ENCODE measurements at regions of chr2 and their contacts with region 1.

Region 1: GRCh38 chr2:74587664-74588277 is 33.3 kb downstream of the DOK1 start:
- DNase-seq: peak; percentile 57
- H3K4me3 ChIP-seq: no peak overlapping the region
- H3K27ac ChIP-seq: no peak overlapping the region
- H3K4me1 ChIP-seq: peaks cover 14% of the 10 kb centered on the region
- H3K27me3 ChIP-seq: no peaks in the 10 kb centered on the region
- CTCF ChIP-seq: peak; percentile 77

Region 2: DNA sequence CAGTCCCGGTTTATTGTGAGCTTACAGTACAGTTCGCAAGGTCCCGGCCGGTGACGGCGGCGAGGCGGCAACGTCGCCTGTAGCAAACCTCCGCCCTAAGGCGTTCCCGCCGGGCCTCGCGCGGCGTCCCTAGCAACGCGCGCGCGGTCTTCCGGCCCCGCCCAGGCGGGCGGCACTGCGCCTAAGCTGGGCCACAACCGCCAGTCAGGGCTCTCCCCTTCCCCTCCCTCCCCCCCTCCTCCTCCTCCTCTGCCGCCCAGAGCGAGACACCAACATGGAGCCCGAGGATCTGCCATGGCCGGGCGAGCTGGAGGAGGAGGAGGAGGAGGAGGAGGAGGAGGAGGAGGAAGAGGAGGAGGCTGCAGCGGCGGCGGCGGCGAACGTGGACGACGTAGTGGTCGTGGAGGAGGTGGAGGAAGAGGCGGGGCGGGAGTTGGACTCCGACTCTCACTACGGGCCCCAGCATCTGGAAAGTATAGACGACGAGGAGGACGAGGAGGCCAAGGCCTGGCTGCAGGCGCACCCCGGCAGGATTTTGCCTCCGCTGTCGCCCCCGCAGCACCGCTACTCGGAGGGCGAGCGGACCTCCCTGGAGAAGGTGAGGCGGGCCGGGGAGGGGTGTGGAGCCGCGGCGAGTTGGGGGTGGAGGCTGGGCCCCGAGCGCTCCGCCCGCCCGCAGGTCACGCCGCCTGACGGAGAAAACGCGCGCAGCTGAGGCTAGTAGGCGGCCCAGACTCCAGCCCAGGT is 1202.0 kb before region 1 on chr2 and contains the start of gene ALMS1:
- CTCF ChIA-PET with region 1: no interaction called
- POLR2A ChIA-PET with region 1: no interaction called
- intact Hi-C with region 1: loop called (anchors 5 kb)
- DNase-seq: peak; percentile 80 to 86
- H3K4me3 ChIP-seq: peak within 1 kb of the TSS; percentile 99
- H3K27ac ChIP-seq: peak within 1 kb of the TSS; percentile 62
- H3K4me1 ChIP-seq: peaks cover 18% of the 10 kb centered on the region
- H3K27me3 ChIP-seq: peaks cover 21% of the 10 kb centered on the region
- CTCF ChIP-seq: no peak
- total RNA-seq, gene ALMS1: 14.7 and 16.7 TPM in 2 replicates

Region 3: GRCh38 chr2:74147727-74148456 is 439.9 kb before region 1 on chr2 and contains the start of gene BOLA3:
- CTCF ChIA-PET with region 1: no interaction called
- POLR2A ChIA-PET with region 1: no interaction called
- intact Hi-C with region 1: no loop called
- DNase-seq: peak; percentile 67 to 86
- H3K4me3 ChIP-seq: peak within 1 kb of the TSS; percentile 99
- H3K27ac ChIP-seq: no peak within 1 kb of the TSS
- H3K4me1 ChIP-seq: 0 out of 2 replicates have a peak, but pooled peaks cover 8% of the 10 kb centered on the region
- H3K27me3 ChIP-seq: no peaks in the 10 kb centered on the region
- CTCF ChIP-seq: peak; percentile 69; the same call in 1 of the 2 replicates
- total RNA-seq, gene BOLA3: 28.2 and 30.4 TPM in 2 replicates

Region 4: GRCh38 chr2:74250189-74250631 is 337.6 kb before region 1 on chr2:
- CTCF ChIA-PET with region 1: no interaction called
- POLR2A ChIA-PET with region 1: no interaction called
- intact Hi-C with region 1: loop called (anchors 5 kb)
- DNase-seq: no peak
- H3K4me3 ChIP-seq: no peak overlapping the region
- H3K27ac ChIP-seq: no peak overlapping the region
- H3K4me1 ChIP-seq: no peaks in the 10 kb centered on the region
- H3K27me3 ChIP-seq: no peaks in the 10 kb centered on the region
- CTCF ChIP-seq: peak; percentile 90

Region 5: GRCh38 chr2:74334931-74335333 is 252.8 kb before region 1 on chr2:
- CTCF ChIA-PET with region 1: no interaction called
- POLR2A ChIA-PET with region 1: no interaction called
- intact Hi-C with region 1: loop called (anchors 5 kb)
- DNase-seq: peak; percentile 59 to 66
- H3K4me3 ChIP-seq: no peak overlapping the region
- H3K27ac ChIP-seq: no peak overlapping the region
- H3K4me1 ChIP-seq: no peaks in the 10 kb centered on the region
- H3K27me3 ChIP-seq: peaks cover 7% of the 10 kb centered on the region; the same call in 1 of the 2 replicates
- CTCF ChIP-seq: peak; percentile 96

Region 6: DNA sequence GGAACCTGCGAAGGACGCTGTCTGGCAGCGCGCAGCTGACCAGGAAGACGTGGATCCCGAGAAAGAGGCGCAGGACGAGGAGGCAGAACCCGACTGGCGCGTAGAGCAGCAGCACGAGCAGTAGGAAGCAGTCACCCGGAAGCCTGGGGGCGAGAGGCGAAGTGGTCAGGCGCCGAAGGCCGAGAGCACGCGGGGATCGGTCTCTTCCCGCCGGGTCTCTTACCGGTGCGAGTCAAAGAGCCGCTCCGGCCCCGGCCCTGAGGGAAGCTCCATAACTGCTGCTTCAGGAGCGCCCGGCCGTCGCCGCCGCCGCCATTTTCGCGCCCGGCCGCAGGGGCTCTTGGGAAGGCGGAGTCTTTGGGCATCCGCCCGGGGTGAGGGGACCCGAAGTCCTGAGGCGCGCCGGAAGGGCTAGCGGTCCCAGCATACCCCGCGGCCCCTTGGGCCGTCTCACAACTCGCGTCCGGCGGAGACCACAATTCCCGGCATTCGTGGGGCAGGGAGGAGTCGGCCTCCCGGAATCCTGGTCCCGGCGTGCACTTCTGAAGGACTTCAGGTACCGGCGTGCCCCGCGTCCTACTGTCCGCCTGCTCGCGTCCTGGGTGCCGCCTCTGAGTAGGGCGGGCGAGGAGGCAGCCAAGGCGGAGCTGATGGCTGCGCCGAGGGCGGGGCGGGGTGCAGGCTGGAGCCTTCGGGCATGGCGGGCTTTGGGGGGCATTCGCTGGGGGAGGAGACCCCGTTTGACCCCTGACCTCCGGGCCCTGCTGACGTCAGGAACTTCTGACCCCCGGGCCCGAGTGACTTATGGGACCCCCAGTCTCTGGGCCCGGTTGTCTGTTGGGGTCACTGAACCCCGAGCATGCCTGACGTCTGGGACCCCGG is 58.2 kb before region 1 on chr2 and contains the starts of genes AUP1 and HTRA2:
- CTCF ChIA-PET with region 1: no interaction called
- POLR2A ChIA-PET with region 1: interaction called, 7 read pairs
- intact Hi-C with region 1: loop called (anchors 5 kb)
- DNase-seq: peak; percentile 97 to 98
- H3K4me3 ChIP-seq: peak within 1 kb of the TSS; percentile 93
- H3K27ac ChIP-seq: peak within 1 kb of the TSS; percentile 48
- H3K4me1 ChIP-seq: peaks cover 18% of the 10 kb centered on the region
- H3K27me3 ChIP-seq: no peaks in the 10 kb centered on the region
- CTCF ChIP-seq: no peak
- total RNA-seq, gene AUP1: 79.2 and 84.0 TPM in 2 replicates
- total RNA-seq, gene HTRA2: 23.2 and 23.5 TPM in 2 replicates

Region 7: GRCh38 chr2:74553892-74554645 is 33.7 kb before region 1 on chr2 and contains the start of gene LOXL3:
- CTCF ChIA-PET with region 1: no interaction called
- POLR2A ChIA-PET with region 1: no interaction called
- intact Hi-C with region 1: loop called (anchors 2 kb)
- DNase-seq: peak; percentile 57 to 74
- H3K4me3 ChIP-seq: peak within 1 kb of the TSS; percentile 78
- H3K27ac ChIP-seq: no peak within 1 kb of the TSS
- H3K4me1 ChIP-seq: peaks cover 16% of the 10 kb centered on the region
- H3K27me3 ChIP-seq: no peaks in the 10 kb centered on the region
- CTCF ChIP-seq: no peak
- total RNA-seq, gene LOXL3: 3.1 and 5.0 TPM in 2 replicates